BJ (cell line): ENCODE measurements at regions of chr6 and their contacts with region 1.

Region 1: GRCh38 chr6:37303932-37304363 is 46.0 kb upstream of the TMEM217 start:
- DNase-seq: no peak
- H3K4me3 ChIP-seq: no peak overlapping the region
- H3K27me3 ChIP-seq: no peaks in the 10 kb centered on the region
- CTCF ChIP-seq: peak; percentile 76

Region 2: GRCh38 chr6:37125783-37126492 is 178.0 kb before region 1 on chr6:
- CTCF ChIA-PET with region 1: no interaction called
- POLR2A ChIA-PET with region 1: no interaction called
- DNase-seq: no peak
- H3K4me3 ChIP-seq: no peak overlapping the region
- H3K27me3 ChIP-seq: no peaks in the 10 kb centered on the region
- CTCF ChIP-seq: no peak

Region 3: DNA sequence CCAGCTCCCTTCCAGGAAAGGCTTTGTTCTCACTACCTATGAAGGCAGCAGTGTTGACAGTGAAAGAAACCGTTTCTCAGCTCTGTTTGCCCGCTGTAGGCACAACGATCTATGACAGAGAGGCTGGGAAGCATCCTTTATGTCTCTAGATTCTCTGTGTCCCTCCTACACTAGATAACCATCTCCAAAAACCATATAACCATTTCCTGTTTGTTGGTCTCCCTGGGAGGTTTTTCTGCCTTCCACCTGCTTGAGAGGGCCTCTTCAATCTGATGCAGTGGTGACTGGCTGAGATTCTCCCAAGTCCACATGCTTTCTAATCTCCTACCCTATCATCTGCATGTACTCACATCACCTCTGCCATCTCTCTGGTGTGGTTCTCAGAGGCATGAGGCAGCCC is 14.0 kb before region 1 on chr6:
- CTCF ChIA-PET with region 1: interaction called, 13 read pairs
- POLR2A ChIA-PET with region 1: no interaction called
- DNase-seq: no peak
- H3K4me3 ChIP-seq: no peak overlapping the region
- H3K27me3 ChIP-seq: no peaks in the 10 kb centered on the region
- CTCF ChIP-seq: no peak

Region 4: DNA sequence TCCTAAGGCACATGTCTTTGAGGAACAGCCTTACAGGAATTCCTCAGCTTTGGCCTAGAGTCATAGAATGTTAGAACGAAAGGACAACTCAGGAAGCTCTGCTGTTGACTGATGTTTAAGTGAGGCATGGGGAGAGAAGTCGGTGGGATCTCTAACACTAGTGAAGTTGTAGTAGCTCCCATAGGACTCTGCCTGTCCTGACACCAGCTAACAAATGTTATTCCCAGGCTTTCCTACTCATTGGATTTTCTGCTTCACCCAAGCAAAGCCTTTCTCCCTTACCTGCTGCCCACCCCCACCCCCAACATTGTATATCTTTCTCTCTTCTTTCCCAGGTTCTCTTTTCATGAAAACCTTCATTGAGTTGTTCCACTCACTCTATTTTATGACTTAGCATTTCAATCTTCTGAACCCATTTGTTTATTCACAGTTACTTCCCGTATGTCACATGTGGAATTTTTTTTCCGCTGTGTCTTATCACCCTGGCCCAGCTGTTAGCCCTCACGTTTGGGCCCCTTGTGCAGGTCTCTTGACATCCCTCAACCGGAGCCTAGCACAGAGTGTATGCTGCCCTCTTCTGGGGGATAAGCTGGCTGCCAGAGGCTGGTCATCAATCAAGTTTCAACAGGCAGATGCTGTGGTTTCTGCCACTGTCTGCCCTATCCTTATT is 10.7 kb after region 1 on chr6:
- CTCF ChIA-PET with region 1: interaction called, 18 read pairs
- POLR2A ChIA-PET with region 1: no interaction called
- DNase-seq: no peak
- H3K4me3 ChIP-seq: no peak overlapping the region
- H3K27me3 ChIP-seq: no peaks in the 10 kb centered on the region
- CTCF ChIP-seq: peak; percentile 52

Region 5: DNA sequence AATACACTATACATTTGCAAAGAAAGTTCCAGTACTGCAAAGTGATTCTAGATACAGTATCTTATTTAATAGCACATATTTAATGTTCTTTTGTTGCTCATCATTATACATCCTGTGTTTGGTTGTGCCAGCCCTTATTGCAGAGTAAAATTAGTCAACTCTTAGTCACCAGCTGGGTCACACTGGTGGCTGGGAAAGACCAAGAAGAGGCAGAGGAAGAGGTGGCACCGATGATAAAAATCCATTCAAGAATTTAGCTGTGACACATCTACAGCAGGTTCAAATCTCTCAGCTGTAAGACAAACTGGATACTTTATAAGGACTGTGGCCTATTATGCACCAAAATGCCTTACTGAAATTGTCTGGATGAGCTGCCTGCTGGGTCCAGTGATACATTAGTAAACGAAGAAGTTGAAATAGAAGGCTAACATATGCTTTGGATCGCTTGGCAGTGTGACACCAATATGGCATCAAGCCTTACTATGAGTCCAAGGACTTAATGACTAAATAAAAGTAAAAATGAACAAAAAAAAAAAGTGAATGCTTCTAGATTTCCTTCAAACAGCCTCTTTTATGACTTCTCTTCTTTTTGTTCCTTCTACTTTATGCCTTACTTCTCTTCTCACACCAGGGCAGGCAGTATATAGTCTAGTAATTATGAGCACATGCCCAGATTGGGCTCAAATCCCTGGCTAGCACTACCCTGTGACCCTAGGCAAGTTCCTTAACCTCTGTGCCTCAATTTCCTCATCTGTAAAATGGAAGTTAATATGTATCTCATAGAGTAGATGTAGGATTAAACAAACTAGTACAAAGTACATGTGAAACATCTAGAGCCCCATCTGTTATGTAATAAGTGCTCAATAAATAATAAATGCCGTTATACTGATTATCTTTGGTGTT is 20.4 kb after region 1 on chr6:
- CTCF ChIA-PET with region 1: interaction called, 10 read pairs
- POLR2A ChIA-PET with region 1: no interaction called
- DNase-seq: no peak
- H3K4me3 ChIP-seq: no peak overlapping the region
- H3K27me3 ChIP-seq: no peaks in the 10 kb centered on the region
- CTCF ChIP-seq: no peak